ENCODE measurements at regions of chr1 and their contacts with region 1.

Region 1: DNA sequence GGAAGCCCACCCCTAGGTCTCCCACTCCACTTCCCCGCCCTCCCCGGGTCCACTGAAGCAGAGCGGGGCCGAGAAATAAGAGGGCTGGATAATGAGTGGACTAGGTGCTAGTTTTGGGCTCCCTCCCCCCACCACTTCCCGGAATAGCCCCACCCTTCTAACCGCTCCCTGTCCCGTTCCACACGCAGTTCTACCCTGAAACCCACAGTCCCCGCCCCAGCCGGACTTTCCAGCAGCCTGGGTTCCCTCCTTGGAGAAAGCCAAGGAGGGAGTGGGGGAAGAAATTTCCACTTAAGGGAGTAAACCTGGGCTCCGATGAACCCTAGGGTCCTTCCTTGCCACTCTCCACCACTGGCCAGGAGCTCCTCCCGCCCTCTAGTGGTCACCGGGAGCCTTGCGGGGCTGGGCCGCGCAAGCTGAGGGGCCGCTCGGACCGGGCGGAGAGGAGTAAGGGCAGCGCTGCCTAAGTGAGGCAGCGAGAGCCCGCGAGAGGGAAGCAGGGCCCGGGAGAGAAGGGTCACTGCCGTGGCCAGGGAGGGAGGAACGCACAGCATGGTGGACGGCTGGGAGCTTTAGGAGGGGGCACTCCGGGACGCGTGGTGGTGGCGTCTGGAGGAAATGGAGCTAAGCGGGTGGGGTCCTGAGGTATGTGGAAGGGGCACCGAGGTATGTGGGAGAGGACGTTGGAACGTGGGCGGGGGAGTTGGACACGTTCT is 14.3 kb downstream of the THBS3 start:
- DNase-seq: peak in 1 of 2 experiments; percentile 99
- H3K4me3 ChIP-seq: peak overlapping the region; percentile 60 to 98 (median 96)
- H3K27ac ChIP-seq: peak overlapping the region; percentile 94
- H3K4me1 ChIP-seq: peaks cover 9 to 31% (median 25%) of the 10 kb centered on the region in 4 experiments
- H3K27me3 ChIP-seq: no peaks in the 10 kb centered on the region
- CTCF ChIP-seq: peak in 2 of 3 experiments; percentile 93; a peak in 3 of 4 replicates
- EP300 ChIP-seq: peak in 1 of 2 experiments; percentile 70; a peak in 1 of 3 replicates
- POLR2A ChIP-seq: no peak; a peak in 1 of 3 replicates
- RAD21 ChIP-seq: peak; percentile 49 to 70

Region 2: DNA sequence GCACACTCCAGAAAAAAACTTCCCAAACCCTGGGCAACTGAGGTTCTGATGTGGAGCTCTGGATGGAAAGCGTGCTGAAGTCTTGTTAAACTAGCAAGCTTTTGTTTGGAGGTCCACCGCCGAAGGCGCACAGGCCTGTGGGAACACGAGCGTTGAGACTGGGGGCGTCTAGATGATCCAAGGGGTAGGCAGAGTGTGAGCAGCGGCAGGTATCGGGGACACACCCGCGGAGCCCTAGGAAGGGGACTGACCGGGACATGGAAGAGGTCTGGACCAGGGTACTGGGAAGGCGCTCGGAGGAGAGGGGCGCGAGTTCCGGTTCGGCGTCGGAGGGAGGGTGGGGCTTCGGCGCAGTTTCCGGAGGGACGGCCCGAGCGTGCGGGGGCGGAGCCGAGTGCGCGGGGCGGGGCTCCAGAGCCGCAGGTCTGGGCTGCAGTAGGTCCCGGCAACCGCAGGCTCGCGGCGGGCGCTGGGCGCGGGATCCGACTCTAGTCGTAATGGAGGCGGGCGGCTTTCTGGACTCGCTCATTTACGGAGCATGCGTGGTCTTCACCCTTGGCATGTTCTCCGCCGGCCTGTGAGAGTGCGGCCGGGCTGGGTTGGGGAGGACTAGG is 57.9 kb before region 1 on chr1 and contains the start of gene SLC50A1:
- CTCF ChIA-PET with region 1: interaction called, 4 read pairs
- POLR2A ChIA-PET with region 1: interaction called, 14 read pairs
- DNase-seq: peak; percentile 76 to 97
- H3K4me3 ChIP-seq: peak within 1 kb of the TSS; percentile 67 to 89 (median 85)
- H3K27ac ChIP-seq: peak within 1 kb of the TSS; percentile 61; the same call in 1 of the 2 replicates
- H3K4me1 ChIP-seq: peaks cover 4 to 26% (median 10%) of the 10 kb centered on the region in 4 experiments; a peak in 5 of 7 replicates
- H3K27me3 ChIP-seq: no peaks in the 10 kb centered on the region
- CTCF ChIP-seq: peak in 1 of 3 experiments; percentile 28; a peak in 2 of 4 replicates
- EP300 ChIP-seq: no peak
- POLR2A ChIP-seq: peak in 1 of 2 experiments; percentile 69; a peak in 2 of 3 replicates
- RAD21 ChIP-seq: no peak; a peak in 1 of 4 replicates
- total RNA-seq, gene SLC50A1: 36.5 and 41.6 TPM in 2 replicates

Region 3: DNA sequence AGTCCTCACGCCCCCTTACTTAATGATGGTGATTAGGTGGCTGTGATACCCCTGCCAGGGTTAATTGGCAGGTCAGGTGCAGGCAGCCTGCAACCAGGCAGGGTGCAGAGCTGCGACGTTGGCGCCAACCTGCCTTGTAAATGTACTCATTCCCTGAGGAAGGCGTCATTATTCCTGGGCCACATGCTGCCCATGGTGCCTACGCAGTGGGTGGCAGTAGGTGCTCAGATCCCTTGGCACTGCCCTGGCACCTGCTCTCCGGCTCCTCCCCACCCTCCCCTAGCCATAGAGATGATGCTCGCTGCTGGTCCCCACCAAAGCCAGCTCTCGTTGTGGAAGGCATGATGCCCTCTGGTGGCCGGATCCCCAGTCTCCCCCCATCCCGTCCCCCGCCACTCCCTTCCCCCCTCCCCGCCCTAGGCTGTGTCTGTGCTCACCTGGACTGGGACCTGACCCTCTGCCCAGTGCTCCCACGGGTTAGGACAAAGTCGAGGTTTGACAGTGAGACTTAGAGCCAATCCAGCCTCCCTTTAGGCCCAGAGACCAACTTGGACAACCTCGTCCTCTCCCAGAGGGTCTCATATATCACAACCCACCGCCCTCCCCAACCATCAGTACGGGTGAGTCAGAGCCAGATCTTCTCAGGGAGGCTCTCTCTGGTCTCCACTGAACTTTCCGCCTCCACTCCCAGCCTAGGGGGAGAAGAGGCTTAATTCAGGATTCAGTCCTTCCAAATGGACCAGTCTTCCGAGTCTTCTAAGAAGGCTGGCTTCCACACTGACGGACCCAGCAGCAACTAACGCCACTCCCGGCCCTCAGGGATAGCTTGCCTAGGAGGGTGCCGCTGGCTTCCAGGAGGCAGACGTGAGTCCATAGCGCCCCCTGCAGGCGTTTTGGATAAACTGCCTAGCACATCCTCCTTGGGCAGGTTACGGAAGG is 26.0 kb before region 1 on chr1:
- CTCF ChIA-PET with region 1: interaction called, 22 read pairs
- POLR2A ChIA-PET with region 1: interaction called, 512 read pairs
- DNase-seq: peak in 1 of 2 experiments; percentile 96
- H3K4me3 ChIP-seq: peak overlapping the region; percentile 30 to 75 (median 72); a peak in 7 of 8 replicates
- H3K27ac ChIP-seq: no peak overlapping the region
- H3K4me1 ChIP-seq: peaks cover 5 to 19% (median 13%) of the 10 kb centered on the region in 4 experiments
- H3K27me3 ChIP-seq: no peaks in the 10 kb centered on the region
- CTCF ChIP-seq: peak in 2 of 3 experiments; percentile 98 to 99; a peak in 3 of 4 replicates
- EP300 ChIP-seq: no peak
- POLR2A ChIP-seq: no peak
- RAD21 ChIP-seq: peak; percentile 96 to 98

Region 4: GRCh38 chr1:155208541-155209311 is 15.3 kb after region 1 on chr1 and contains the start of gene MTX1:
- CTCF ChIA-PET with region 1: interaction called, 20 read pairs
- POLR2A ChIA-PET with region 1: interaction called, 512 read pairs
- DNase-seq: peak in 1 of 2 experiments; percentile 90
- H3K4me3 ChIP-seq: peak within 1 kb of the TSS; percentile 86 to 95 (median 94)
- H3K27ac ChIP-seq: peak within 1 kb of the TSS; percentile 85
- H3K4me1 ChIP-seq: peaks cover 3 to 20% (median 12%) of the 10 kb centered on the region in 4 experiments
- H3K27me3 ChIP-seq: peaks cover 0 to 3% (median 0%) of the 10 kb centered on the region in 4 experiments; a peak in 2 of 7 replicates
- CTCF ChIP-seq: no peak
- EP300 ChIP-seq: peak in 1 of 2 experiments; percentile 86; a peak in 1 of 3 replicates
- POLR2A ChIP-seq: peak in 1 of 2 experiments; percentile 74; a peak in 2 of 3 replicates
- RAD21 ChIP-seq: no peak
- total RNA-seq, gene MTX1: 47.9 and 55.0 TPM in 2 replicates

Region 5: DNA sequence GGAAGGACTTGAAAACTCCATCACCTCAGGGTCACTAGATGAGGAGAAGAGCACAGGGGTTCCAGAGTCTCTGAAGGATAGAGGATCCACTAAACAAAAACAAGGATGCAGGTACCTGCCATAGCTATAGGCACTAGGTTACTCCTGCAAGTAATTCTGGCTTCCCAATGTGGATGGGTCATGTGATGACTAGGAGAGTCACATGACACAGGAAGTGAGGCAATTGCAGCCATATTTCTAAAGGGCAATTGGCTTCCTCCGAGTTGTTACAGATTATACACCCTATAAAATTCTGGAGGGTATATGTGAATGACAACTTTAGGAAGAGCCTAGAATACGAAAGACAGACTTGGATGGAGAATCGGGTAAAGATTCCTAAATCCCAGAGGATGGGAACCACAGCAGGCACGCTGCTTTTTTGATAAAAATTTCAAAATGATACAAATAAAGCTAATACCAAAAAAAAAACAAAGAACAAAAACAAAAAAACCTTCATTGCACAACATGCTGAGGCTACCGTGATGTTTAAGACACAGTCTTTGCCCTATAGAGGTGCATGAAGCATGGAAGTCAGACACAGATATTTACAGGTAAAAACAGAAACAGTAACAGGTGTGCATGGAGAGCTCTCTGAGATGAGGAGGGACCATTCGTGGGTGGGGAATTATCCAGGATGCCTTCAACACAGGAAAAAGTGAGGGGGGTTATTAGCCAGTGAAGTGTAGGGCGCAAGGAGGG is 25.6 kb after region 1 on chr1:
- CTCF ChIA-PET with region 1: interaction called, 4 read pairs
- POLR2A ChIA-PET with region 1: interaction called, 28 read pairs
- DNase-seq: peak in 1 of 2 experiments; percentile 69
- H3K4me3 ChIP-seq: peak overlapping the region in 2 of 4 experiments; percentile 20 to 21; a peak in 2 of 8 replicates
- H3K27ac ChIP-seq: no peak overlapping the region
- H3K4me1 ChIP-seq: peaks cover 0 to 7% (median 0%) of the 10 kb centered on the region in 4 experiments; a peak in 1 of 7 replicates
- H3K27me3 ChIP-seq: no peaks in the 10 kb centered on the region
- CTCF ChIP-seq: no peak
- EP300 ChIP-seq: peak in 1 of 2 experiments; percentile 61; a peak in 1 of 3 replicates
- POLR2A ChIP-seq: no peak
- RAD21 ChIP-seq: no peak

Region 6: GRCh38 chr1:155227261-155228095 is 34.0 kb after region 1 on chr1:
- CTCF ChIA-PET with region 1: interaction called, 9 read pairs
- POLR2A ChIA-PET with region 1: interaction called, 48 read pairs
- DNase-seq: peak; percentile 95 to 96
- H3K4me3 ChIP-seq: peak overlapping the region; percentile 67 to 92 (median 82)
- H3K27ac ChIP-seq: peak overlapping the region; percentile 91
- H3K4me1 ChIP-seq: peaks cover 0 to 14% (median 4%) of the 10 kb centered on the region in 4 experiments; a peak in 5 of 7 replicates
- H3K27me3 ChIP-seq: peaks cover 0 to 2% (median 0%) of the 10 kb centered on the region in 4 experiments; a peak in 1 of 7 replicates
- CTCF ChIP-seq: peak in 2 of 3 experiments; percentile 14 to 17; a peak in 2 of 4 replicates
- EP300 ChIP-seq: no peak
- POLR2A ChIP-seq: peak; percentile 76 to 91
- RAD21 ChIP-seq: no peak